ENCODE measurements at regions of chr16 and their contacts with region 1.

Region 1: DNA sequence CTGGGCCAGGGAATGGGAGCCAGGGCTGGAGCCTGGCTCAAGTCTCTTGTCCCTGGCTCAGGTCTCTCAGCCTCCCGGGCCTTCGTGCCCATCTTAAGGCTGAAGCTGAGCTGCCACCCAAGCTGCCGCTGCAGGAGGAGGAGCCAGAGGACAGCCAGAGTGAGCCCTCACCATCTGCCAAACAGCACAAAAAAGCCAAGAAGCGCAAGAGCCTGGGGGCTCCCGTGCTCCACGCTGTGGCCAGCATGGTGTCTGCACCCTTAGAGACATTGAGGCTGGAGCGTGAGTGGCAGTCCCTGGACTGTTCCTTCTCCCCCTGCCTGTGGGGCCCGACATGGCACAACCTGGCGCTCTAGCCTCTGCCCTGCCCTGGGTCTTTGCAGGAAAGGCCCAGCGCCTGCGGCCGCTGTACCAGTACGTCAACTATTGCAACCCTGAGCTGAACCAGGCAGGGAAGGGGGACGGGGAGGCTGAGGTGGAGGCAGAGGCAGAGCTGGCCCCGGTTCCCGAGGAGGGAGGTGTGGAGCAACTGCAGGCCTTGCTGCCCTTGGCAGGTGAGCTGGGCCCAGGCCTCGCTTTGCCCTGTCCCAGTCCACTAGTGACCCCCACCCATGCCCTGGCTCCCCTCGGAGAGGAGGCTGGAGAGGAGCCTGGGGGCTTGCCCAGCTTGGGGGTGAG is 1.3 kb downstream of the C16orf86 start:
- DNase-seq: peak; percentile 92
- H3K4me3 ChIP-seq: no peak overlapping the region
- H3K27ac ChIP-seq: no peak overlapping the region
- H3K4me1 ChIP-seq: peaks cover 17% of the 10 kb centered on the region
- H3K27me3 ChIP-seq: no peaks in the 10 kb centered on the region
- CTCF ChIP-seq: peak; percentile 85 to 98
- POLR2A ChIP-seq: no peak

Region 2: DNA sequence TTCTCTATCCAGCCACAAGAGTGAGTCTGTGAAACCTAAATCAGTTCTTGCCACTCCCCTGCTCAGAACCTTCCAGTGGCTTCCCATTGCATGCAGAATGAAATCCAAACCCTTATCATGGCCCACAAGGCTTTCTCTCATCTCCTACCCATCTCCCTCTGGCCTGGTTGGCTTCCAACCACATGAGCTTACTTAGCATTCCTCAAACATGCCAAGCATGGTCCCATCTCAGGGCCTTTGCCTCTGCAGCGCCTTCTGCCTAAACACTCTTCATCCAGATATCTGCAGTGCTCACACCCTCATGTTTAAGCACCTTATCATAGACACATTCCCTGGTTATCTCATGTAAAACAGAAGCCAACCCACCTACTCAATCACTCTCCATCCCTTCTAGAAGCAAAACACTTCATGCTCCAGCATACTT is 1133.6 kb before region 1 on chr16:
- CTCF ChIA-PET with region 1: no interaction called
- POLR2A ChIA-PET with region 1: no interaction called
- dilution Hi-C with region 1: no loop called
- intact Hi-C with region 1: no loop called
- DNase-seq: no peak
- H3K4me3 ChIP-seq: no peak overlapping the region
- H3K27ac ChIP-seq: no peak overlapping the region
- H3K4me1 ChIP-seq: no peaks in the 10 kb centered on the region
- H3K27me3 ChIP-seq: no peaks in the 10 kb centered on the region
- CTCF ChIP-seq: no peak
- POLR2A ChIP-seq: no peak

Region 3: GRCh38 chr16:67499106-67499505 is 168.8 kb before region 1 on chr16:
- CTCF ChIA-PET with region 1: interaction called, 8 read pairs
- POLR2A ChIA-PET with region 1: no interaction called
- dilution Hi-C with region 1: no loop called
- intact Hi-C with region 1: loop called (anchors 1 kb)
- DNase-seq: no peak
- H3K4me3 ChIP-seq: no peak overlapping the region
- H3K27ac ChIP-seq: no peak overlapping the region
- H3K4me1 ChIP-seq: no peaks in the 10 kb centered on the region
- H3K27me3 ChIP-seq: no peaks in the 10 kb centered on the region
- CTCF ChIP-seq: no peak
- POLR2A ChIP-seq: no peak

Region 4: DNA sequence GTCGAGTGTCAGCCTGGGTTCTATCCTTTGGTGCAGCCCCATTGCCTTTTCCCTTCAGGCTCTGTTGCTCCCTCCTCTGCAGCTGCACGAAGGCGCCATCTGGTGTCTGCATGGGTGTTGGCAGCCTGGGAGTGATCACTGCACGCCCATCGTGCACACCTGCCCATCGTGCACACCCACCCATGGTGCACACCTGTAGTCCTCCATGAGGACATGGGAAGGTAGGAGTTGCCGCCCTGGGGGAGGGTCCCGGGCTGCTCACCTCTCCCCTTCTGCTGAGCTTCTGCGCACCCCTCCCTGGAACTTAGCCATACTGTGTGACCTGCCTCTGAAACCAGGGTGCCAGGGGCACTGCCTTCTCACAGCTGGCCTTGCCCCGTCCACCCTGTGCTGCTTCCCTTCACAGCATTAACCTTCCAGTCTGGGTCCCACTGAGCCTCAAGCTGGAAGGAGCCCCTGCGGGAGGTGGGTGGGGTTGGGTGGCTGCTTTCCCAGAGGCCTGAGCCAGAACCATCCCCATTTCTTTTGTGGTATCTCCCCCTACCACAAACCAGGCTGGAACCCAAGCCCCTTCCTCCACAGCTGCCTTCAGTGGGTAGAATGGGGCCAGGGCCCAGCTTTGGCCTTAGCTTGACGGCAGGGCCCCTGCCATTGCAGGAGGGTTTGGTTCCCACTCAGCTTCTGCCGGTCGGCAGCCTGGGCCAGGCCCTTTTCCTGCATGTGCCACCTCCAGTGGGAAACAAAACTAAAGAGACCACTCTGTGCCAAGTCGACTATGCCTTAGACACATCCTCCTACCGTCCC is 260.8 kb after region 1 on chr16:
- CTCF ChIA-PET with region 1: interaction called, 29 read pairs
- POLR2A ChIA-PET with region 1: no interaction called
- dilution Hi-C with region 1: no loop called
- intact Hi-C with region 1: loop called (anchors 1 kb)
- DNase-seq: peak; percentile 50
- H3K4me3 ChIP-seq: no peak overlapping the region
- H3K27ac ChIP-seq: no peak overlapping the region
- H3K4me1 ChIP-seq: peaks cover 10% of the 10 kb centered on the region
- H3K27me3 ChIP-seq: no peaks in the 10 kb centered on the region
- CTCF ChIP-seq: peak; percentile 87 to 93
- POLR2A ChIP-seq: no peak

Region 5: GRCh38 chr16:67987460-67988160 is 319.7 kb after region 1 on chr16:
- CTCF ChIA-PET with region 1: no interaction called
- POLR2A ChIA-PET with region 1: no interaction called
- dilution Hi-C with region 1: no loop called
- intact Hi-C with region 1: no loop called
- DNase-seq: peak; percentile 33
- H3K4me3 ChIP-seq: no peak overlapping the region
- H3K27ac ChIP-seq: no peak overlapping the region
- H3K4me1 ChIP-seq: peaks cover 17% of the 10 kb centered on the region
- H3K27me3 ChIP-seq: no peaks in the 10 kb centered on the region
- CTCF ChIP-seq: no peak
- POLR2A ChIP-seq: no peak